ENCODE measurements at regions of chr2 and their contacts with region 1.

Region 1: DNA sequence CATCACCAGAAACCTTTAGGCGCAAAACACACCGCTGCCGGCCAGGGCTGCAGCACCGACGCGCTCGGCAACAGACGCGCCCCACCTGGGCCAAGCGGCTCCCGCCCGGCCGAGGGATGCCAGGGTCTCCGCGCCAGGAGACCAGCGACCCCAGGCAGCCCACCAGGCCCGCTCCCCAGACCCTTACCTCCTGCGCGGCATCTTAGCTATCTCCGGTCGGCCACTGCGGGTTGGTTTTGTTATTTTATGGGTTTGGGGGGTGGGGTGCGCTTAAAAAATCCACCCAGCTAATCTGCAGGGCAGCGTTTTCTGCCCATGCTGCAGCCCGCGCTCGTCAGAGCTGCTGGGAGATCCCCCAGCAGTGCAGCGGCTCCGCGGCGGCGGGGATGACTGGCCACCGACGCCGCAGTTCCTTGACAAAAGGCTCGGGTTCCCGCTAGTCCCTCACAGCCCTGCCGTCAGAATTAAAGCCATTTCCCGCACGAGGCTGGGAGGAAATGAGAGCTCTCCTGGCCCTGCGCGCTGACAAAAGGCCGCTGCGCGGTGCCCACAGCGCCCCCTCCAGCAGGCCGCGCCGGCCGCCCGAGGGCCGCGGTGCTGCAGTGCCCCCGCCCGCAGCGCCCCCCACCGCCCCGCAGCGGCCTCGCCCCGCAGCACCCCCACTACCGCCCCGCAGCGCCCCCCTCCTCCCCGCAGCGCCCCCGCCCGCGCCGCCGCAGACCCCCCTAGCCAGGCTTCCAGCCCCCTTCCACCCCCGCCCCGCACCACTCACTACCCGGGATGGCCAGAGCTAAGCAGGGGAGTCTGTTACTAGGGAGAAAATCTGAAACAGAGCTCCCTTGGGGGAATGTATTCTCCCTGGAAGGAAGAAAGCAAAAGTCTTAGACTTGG is at the start of gene ADD2:
- DNase-seq: peak; percentile 74
- ATAC-seq: peak; percentile 69
- H3K4me3 Mint-ChIP-seq: peak within 1 kb of the TSS; percentile 91
- H3K27ac Mint-ChIP-seq: peak within 1 kb of the TSS; percentile 96
- H3K4me1 Mint-ChIP-seq: peaks cover 49% of the 10 kb centered on the region
- H3K27me3 Mint-ChIP-seq: peaks cover 4% of the 10 kb centered on the region
- CTCF ChIP-seq: 0 out of 2 replicates have a peak, but pooled peaks have one; percentile 25
- total RNA-seq, gene ADD2: 164 to 196 TPM (median 187 TPM) in 3 replicates

Region 2: GRCh38 chr2:70686577-70687460 is 81.1 kb before region 1 on chr2:
- CTCF ChIA-PET with region 1: interaction called, 50 read pairs
- POLR2A ChIA-PET with region 1: interaction called, 4 read pairs
- DNase-seq: peak; percentile 84
- ATAC-seq: peak; percentile 96
- H3K4me3 Mint-ChIP-seq: no peak overlapping the region
- H3K27ac Mint-ChIP-seq: peak overlapping the region; percentile 13; the same call in 1 of the 2 replicates
- H3K4me1 Mint-ChIP-seq: peaks cover 13% of the 10 kb centered on the region
- H3K27me3 Mint-ChIP-seq: no peaks in the 10 kb centered on the region
- CTCF ChIP-seq: peak; percentile 44

Region 3: GRCh38 chr2:70724366-70724765 is 43.6 kb before region 1 on chr2:
- CTCF ChIA-PET with region 1: interaction called, 10 read pairs
- POLR2A ChIA-PET with region 1: no interaction called
- DNase-seq: no peak
- ATAC-seq: no peak
- H3K4me3 Mint-ChIP-seq: no peak overlapping the region
- H3K27ac Mint-ChIP-seq: no peak overlapping the region
- H3K4me1 Mint-ChIP-seq: peaks cover 86% of the 10 kb centered on the region
- H3K27me3 Mint-ChIP-seq: no peaks in the 10 kb centered on the region
- CTCF ChIP-seq: no peak

Region 4: GRCh38 chr2:70748002-70748784 is 19.8 kb before region 1 on chr2:
- CTCF ChIA-PET with region 1: interaction called, 13 read pairs
- POLR2A ChIA-PET with region 1: no interaction called
- DNase-seq: no peak
- ATAC-seq: peak; percentile 68
- H3K4me3 Mint-ChIP-seq: no peak overlapping the region
- H3K27ac Mint-ChIP-seq: no peak overlapping the region
- H3K4me1 Mint-ChIP-seq: peaks cover 76% of the 10 kb centered on the region
- H3K27me3 Mint-ChIP-seq: no peaks in the 10 kb centered on the region
- CTCF ChIP-seq: no peak

Region 5: GRCh38 chr2:70789304-70790135 is 21.6 kb after region 1 on chr2:
- CTCF ChIA-PET with region 1: interaction called, 30 read pairs
- POLR2A ChIA-PET with region 1: no interaction called
- DNase-seq: peak; percentile 83
- ATAC-seq: peak; percentile 92
- H3K4me3 Mint-ChIP-seq: peak overlapping the region; percentile 72
- H3K27ac Mint-ChIP-seq: no peak overlapping the region; the same call in 1 of the 2 replicates
- H3K4me1 Mint-ChIP-seq: peaks cover 15% of the 10 kb centered on the region
- H3K27me3 Mint-ChIP-seq: peaks cover 90% of the 10 kb centered on the region
- CTCF ChIP-seq: peak; percentile 33

Region 6: DNA sequence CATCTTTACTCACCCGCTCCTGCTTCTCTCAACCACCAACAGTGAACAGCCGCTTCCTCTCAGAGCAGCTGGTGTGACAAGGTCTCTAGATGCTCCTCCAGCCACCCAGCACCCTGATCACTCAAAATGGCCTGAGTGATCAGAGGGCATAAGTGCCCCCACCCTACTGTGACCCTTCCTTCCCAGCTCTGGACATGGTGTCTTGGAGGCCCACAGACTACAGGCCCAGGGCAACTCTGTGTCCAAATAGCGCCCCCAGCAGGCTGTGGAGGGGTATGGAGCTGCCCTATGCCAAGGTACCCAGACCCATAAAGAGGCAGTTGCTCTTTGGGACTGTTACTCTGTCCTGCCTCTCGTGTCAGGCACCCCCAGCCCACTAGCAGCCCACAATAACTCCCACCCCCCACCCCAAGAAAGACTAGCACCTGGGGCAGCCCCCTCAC is 192.4 kb after region 1 on chr2:
- CTCF ChIA-PET with region 1: no interaction called
- POLR2A ChIA-PET with region 1: no interaction called
- DNase-seq: peak; percentile 72
- ATAC-seq: peak; percentile 60
- H3K4me3 Mint-ChIP-seq: no peak overlapping the region
- H3K27ac Mint-ChIP-seq: no peak overlapping the region
- H3K4me1 Mint-ChIP-seq: peaks cover 6% of the 10 kb centered on the region
- H3K27me3 Mint-ChIP-seq: peaks cover 54% of the 10 kb centered on the region
- CTCF ChIP-seq: peak; percentile 80

Measured in WTC11 (cell line).